Activated T-helper 2 cell treated with anti-CD3 and anti-CD28 coated beads, Interferon-gamma antibody, Interleukin-2, Interleukin-4, amounts not matched to agents 10 μg/mL and 5 μg/mL and 100 μg/mL, durations not matched to agents 14 hours and 24 hours and 36 hours (primary cell): ENCODE measurements at regions of chr6 and their contacts with region 1.

Region 1: GRCh38 chr6:108896111-108896661 is 48.0 kb downstream of the ARMC2 start:
- DNase-seq: no peak
- H3K4me3 Mint-ChIP-seq: peak overlapping the region; percentile 30
- H3K27ac Mint-ChIP-seq: peak overlapping the region; percentile 80
- H3K4me1 Mint-ChIP-seq: peaks cover 37% of the 10 kb centered on the region
- H3K27me3 Mint-ChIP-seq: peaks cover 7% of the 10 kb centered on the region

Region 2: GRCh38 chr6:108782179-108783041 is 113.8 kb before region 1 on chr6:
- intact Hi-C with region 1: loop called (anchors 5 kb)
- DNase-seq: peak; percentile 65
- H3K4me3 Mint-ChIP-seq: peak overlapping the region; percentile 55
- H3K27ac Mint-ChIP-seq: no peak overlapping the region
- H3K4me1 Mint-ChIP-seq: peaks cover 11% of the 10 kb centered on the region
- H3K27me3 Mint-ChIP-seq: peaks cover 66% of the 10 kb centered on the region

Region 3: DNA sequence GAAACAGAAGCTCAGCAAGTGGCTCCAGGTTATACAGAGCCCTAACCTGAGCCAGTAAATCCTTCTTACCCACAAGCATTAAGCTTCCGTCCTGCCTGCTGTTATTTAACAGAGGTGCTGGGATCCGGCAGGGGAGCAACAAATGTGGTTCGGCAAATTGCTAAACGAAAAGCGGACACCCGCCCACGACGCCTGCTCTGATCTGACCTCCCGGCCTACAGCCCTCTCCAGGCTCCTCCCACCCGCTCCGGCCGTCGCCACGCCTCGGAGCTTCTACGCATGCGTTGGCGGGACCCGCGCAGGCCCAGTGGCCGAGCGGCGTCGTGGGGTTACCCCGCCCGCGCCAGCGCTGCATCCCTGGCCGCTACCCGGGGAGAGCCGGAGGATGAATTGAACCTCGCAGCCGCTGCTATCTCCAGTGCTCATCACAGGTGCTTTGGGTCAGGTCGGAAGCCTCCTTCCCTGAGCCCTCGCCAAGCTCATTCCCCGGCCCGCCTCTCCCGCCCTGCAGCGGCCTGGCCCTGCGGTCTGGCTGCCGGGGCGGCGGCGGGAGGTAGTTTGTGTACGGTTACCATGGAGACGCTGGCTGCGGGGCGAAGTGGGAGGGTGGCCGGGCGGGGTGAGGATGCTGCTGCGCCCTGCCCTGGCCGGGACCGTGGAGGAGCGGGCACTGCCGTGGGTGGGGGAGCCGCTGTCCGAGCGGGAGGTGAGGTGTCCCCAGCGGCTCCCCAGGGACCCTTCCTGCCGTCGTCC is 47.9 kb before region 1 on chr6 and contains the start of gene ARMC2:
- intact Hi-C with region 1: no loop called
- DNase-seq: peak; percentile 85
- H3K4me3 Mint-ChIP-seq: peak within 1 kb of the TSS; percentile 81
- H3K27ac Mint-ChIP-seq: peak within 1 kb of the TSS; percentile 42
- H3K4me1 Mint-ChIP-seq: peaks cover 22% of the 10 kb centered on the region
- H3K27me3 Mint-ChIP-seq: peaks cover 28% of the 10 kb centered on the region
- total RNA-seq, gene ARMC2: 1.9 and 2.7 TPM in 2 replicates

Region 4: GRCh38 chr6:108874470-108875160 is 21.6 kb before region 1 on chr6:
- intact Hi-C with region 1: loop called (anchors 2 kb)
- DNase-seq: peak; percentile 58
- H3K4me3 Mint-ChIP-seq: peak overlapping the region; percentile 47
- H3K27ac Mint-ChIP-seq: peak overlapping the region; percentile 81
- H3K4me1 Mint-ChIP-seq: peaks cover 53% of the 10 kb centered on the region
- H3K27me3 Mint-ChIP-seq: peaks cover 15% of the 10 kb centered on the region

Region 5: GRCh38 chr6:108921547-108922361 is 25.6 kb after region 1 on chr6:
- intact Hi-C with region 1: loop called (anchors 2 kb)
- DNase-seq: no peak
- H3K4me3 Mint-ChIP-seq: no peak overlapping the region
- H3K27ac Mint-ChIP-seq: peak overlapping the region; percentile 4
- H3K4me1 Mint-ChIP-seq: peaks cover 37% of the 10 kb centered on the region
- H3K27me3 Mint-ChIP-seq: peaks cover 65% of the 10 kb centered on the region